ENCODE measurements at regions of chr17 and their contacts with region 1.

Region 1: DNA sequence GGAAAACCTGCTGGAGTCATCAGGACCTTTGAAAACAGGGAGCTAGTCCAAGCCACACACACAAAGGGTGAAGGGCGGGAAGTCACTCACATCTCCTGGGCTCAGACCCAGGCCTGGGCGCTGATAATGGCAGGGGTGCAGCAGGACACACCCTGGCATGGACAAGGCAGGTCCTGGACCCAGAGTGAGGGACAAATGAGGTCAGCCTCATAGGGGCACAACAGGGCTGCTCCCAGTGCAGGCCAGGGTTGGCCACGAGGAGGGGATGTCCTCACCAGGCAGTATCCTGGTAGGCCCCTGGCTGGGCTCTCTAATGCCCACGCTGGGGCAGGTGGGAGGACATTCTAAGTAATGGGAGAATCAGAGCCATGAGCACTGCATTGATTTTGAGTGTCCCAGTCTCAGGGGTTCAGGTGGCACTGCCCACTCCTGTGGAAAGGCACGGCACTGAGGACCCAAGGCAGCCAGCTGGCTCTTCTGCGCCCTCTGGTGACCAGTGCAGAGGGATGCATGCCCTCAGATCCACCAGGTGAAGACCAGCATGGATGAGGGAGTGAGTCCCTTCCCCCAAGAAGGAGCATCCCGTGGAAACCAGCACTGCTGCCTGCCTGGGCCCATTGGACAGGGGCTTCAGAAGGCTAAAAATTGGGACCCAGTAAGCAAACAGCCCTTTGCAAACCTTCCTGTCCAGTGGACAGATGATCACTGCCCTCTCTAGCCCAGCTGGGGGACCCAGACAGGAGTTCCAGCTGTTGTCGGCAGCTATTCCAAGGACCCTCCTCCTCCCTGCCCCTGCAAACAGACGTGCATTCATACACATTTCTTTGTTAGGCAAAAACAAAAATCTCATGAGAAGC is 23.4 kb upstream of the SREBF1 start:
- DNase-seq: peak; percentile 43 to 72
- ATAC-seq: peak; percentile 92

Region 2: GRCh38 chr17:17675925-17676534 is 184.1 kb before region 1 on chr17:
- intact Hi-C with region 1: loop called in 1 of 2 experiments (anchors 10 kb)
- DNase-seq: peak; percentile 5 to 14
- ATAC-seq: peak; percentile 53

Region 3: DNA sequence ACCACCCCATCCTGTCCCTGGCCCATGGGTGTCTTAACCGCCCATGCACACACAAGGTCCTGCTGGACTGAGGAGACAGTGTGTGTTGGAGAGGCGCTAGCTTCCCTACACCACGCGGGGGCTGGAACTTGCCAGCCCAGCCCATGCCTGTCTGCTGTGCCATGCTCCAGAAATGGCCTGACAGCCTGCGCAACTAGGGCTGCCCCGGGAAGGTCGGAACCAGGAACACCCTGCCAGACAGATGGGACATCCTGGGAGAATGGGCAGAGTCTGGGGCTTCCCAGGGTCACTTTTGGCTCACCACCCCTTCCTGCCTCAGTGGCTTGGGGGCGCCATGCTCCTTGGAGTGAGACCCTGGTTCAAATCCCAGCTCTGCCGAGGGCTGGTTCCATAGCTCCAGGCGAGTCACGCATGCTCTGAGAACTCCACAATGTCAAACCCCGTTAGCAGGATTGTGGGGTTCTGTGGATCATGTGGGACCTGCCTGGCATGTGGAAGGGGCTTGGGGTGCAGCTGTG is 59.6 kb before region 1 on chr17:
- intact Hi-C with region 1: loop called in 1 of 2 experiments (anchors 5 kb)
- DNase-seq: no peak
- ATAC-seq: no peak

Region 4: DNA sequence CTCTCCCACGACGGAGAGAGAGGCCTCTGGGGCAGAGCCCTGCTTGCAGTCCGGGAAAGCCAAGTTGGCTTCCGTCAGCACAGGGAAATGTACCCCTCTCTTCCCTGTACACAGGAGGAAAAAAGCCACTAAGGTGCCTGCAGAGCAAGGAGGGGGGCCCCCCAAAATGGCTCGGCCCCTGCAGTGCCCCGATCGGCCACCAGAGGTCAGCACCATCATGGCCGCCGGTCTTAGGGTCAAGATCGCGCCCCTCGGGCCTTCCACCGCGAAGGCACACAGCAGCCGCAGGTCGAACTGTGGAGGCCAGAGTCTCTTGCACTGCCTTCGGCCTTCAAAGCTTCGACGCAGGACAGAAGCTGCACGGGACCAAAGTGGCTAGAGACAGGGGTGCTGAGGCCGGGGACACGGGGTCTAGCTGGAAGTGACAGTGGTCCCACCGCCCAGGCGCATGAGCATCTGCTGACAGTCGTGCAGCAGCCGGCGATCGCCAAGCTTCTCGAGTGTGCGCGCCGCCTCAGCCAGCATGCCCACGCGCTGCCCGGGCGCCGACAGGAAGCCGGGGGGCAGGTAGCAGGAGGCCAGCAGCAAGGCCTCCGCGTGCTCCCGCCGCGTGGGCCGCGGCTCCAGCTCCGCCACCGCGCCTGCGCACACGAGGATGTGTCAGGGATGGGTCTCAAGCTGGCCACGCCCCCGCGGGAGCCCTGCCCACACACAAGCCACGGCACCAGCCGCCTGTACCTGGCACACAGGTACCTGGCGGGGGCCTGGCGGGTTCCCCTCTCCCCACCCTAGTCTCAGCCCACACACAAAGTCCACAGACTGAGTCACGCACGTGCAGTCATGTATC is 47.7 kb before region 1 on chr17:
- intact Hi-C with region 1: loop called in 1 of 2 experiments (anchors 2 kb)
- DNase-seq: peak in 1 of 2 donors; percentile 72
- ATAC-seq: peak; percentile 39

Region 5: DNA sequence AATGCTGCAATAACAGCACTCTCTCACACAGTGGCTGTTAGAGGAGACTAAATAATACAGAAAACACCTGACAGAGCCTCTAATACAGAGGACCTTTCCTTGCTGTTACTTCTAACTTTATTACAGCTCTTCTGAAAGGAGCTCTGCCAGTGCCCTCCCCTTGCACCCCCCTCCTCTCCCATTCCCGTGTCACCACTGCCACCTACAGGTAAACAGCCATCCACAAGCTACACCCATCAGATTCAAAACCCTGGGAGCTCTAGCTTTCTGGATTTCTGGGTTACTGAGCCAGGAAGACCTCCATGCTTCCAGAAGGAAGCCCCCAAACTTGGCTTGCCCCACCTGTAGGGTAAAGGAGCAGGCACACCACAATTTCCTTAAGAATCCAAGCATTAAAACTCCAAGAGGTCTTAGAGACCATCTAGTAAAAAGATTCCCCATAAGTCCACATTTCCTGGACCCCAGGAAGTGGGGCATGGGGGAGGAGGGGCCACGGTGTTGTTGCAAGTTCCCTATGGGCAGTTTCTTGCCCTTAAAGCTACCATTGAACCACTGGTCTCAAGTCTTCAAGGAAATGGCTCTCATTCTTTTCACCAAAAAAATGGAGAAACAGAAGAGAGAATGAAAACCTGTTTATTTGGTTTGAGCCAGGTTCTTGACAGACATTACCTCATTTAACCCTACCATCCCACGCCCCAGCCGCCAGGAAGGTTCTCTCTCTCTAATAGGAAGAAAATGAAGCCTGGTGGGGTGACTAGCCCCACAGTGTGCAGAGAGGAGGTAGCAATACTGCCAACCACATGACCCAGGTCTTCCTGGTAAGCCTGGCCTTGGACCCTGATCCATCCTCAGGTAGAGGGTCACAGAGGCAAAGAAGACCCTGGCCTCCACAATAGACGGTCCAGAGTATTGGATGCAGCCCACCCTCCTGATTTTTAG is 59.3 kb after region 1 on chr17:
- intact Hi-C with region 1: no loop called
- DNase-seq: peak; percentile 77 to 79
- ATAC-seq: peak; percentile 65